ENCODE measurements at regions of chr4 and their contacts with region 1.

Region 1: DNA sequence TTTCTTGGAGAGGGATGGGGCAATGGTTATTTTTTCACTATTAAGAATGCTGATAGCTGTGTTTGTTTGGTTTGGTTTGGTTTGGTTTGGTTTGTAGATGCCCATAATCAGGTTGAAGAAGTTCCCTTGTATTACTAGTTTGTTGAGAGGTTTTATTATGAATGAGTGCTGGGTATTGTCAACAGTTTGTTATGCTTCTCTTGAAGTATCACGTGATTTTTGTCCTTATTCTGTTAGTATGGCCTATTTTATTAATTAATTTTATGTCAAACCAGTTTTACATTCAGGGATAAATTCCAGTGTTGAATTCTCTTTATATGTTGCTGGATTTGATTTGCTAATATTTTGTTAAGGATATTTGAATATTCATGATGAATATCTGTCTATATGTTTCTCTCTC is 449.8 kb upstream of the NWD2 start:
- DNase-seq: no peak
- H3K4me3 ChIP-seq: no peak overlapping the region
- H3K27ac ChIP-seq: no peak overlapping the region
- H3K4me1 ChIP-seq: no peaks in the 10 kb centered on the region
- H3K27me3 ChIP-seq: no peaks in the 10 kb centered on the region
- CTCF ChIP-seq: no peak

Region 2: DNA sequence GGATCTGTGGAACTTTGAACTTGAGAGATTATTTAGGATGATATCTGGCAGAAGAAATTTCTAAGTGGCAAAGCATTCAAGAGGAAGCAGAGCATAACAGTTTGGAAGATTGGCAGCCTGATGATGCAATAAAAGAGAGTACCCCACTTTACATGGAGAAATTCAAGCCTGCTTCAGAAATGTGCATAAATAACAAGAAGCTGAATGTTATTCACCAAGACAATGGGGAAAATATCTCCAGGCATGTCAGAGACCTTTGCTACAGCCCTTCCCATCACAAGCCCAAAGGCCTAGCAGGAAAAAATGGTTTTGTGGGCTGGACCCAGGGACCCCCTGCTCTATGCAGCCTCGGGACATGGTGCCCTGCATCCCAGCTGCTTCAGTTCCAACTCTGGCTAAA is 92.5 kb before region 1 on chr4:
- CTCF ChIA-PET with region 1: no interaction called
- POLR2A ChIA-PET with region 1: no interaction called
- intact Hi-C with region 1: no loop called
- DNase-seq: no peak
- H3K4me3 ChIP-seq: no peak overlapping the region
- H3K27ac ChIP-seq: no peak overlapping the region
- H3K4me1 ChIP-seq: no peaks in the 10 kb centered on the region
- H3K27me3 ChIP-seq: no peaks in the 10 kb centered on the region
- CTCF ChIP-seq: no peak

Region 3: GRCh38 chr4:36763814-36764213 is 30.9 kb before region 1 on chr4:
- CTCF ChIA-PET with region 1: no interaction called
- POLR2A ChIA-PET with region 1: no interaction called
- intact Hi-C with region 1: loop called (anchors 2 kb)
- DNase-seq: no peak
- H3K4me3 ChIP-seq: no peak overlapping the region
- H3K27ac ChIP-seq: no peak overlapping the region
- H3K4me1 ChIP-seq: no peaks in the 10 kb centered on the region
- H3K27me3 ChIP-seq: no peaks in the 10 kb centered on the region
- CTCF ChIP-seq: no peak